Activated T-helper 1 cell treated with anti-CD3 and anti-CD28 coated beads, Interleukin-12 subunit alpha, Interleukin-12 subunit beta, Interleukin-2, Interleukin-4 antibody, amounts not matched to agents 30 ng/mL and 10 ng/mL and 1 ng/mL, durations not matched to agents 14 hours and 24 hours and 36 hours (primary cell): ENCODE measurements at regions of chr5 and their contacts with region 1.

Region 1: DNA sequence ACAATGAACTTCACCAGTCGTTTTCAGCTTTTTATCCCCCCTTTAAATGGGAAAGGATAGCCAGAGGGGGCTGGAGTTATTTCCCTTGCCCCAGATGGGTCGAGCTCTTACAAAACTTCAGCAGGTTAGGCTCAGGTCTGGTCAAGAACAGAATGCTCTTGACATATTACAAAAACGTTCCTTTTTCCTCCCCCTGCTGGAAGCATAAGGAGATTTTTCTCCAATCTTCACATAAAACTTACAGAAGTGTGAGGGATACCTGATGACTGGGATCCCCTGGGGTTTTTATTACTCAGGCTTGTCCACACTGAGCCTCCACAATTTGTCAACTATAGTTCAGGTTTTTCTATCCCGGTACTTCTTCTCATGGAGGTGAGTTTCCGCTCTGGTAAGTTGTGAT is 60.8 kb downstream of the CSF2 start:
- DNase-seq: no peak
- H3K4me3 Mint-ChIP-seq: no peak overlapping the region
- H3K27ac Mint-ChIP-seq: no peak overlapping the region
- H3K4me1 Mint-ChIP-seq: peaks cover 32% of the 10 kb centered on the region
- H3K27me3 Mint-ChIP-seq: peaks cover 17% of the 10 kb centered on the region

Region 2: GRCh38 chr5:132162945-132163344 is 28.6 kb after region 1 on chr5:
- intact Hi-C with region 1: loop called (anchors 5 kb)
- DNase-seq: no peak
- H3K4me3 Mint-ChIP-seq: no peak overlapping the region
- H3K27ac Mint-ChIP-seq: no peak overlapping the region
- H3K4me1 Mint-ChIP-seq: no peaks in the 10 kb centered on the region
- H3K27me3 Mint-ChIP-seq: peaks cover 8% of the 10 kb centered on the region

Region 3: GRCh38 chr5:133460172-133460758 is 1325.9 kb after region 1 on chr5:
- intact Hi-C with region 1: no loop called
- DNase-seq: peak; percentile 12
- H3K4me3 Mint-ChIP-seq: no peak overlapping the region
- H3K27ac Mint-ChIP-seq: no peak overlapping the region
- H3K4me1 Mint-ChIP-seq: no peaks in the 10 kb centered on the region
- H3K27me3 Mint-ChIP-seq: peaks cover 14% of the 10 kb centered on the region